GM12878 (cell line): ENCODE measurements at regions of chr1 and their contacts with region 1.

Region 1: DNA sequence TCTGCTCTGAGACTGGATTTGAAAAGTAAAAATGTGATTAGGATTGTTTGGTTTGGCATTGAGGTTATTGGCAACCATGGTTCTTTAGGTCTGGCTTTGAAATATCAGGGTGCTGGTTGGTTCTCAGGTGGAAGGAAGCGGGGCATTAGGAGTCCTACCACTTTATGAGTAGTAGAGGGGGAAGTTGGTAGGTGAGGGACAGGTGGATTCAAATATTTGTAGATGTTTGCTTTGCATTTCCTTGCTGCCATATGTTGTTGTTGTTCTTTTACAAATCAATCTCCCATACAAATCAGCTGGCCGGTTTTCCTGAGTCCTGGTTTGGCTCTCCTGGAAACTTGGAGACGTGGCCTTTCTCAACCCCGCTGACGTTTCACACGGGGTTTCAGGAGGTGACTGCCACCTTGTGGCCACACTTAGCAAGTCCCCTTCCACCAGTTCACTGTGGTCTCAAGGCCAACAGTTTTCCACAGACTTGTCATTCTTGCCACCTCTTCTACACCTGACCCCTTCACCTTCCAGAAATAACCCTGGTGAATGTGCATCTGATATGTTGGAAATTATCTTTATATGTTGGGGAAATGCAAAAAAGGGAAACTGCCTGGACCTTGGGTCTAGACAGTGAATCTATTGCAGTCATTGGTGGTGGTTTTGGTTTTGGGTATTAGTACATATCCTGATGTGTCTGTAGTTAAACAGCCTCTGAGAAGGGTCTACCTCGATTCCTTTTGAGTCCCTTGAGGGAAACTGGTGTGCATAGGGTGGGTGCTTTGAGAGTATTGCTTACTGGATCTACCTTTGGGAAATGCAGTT is 127.0 kb upstream of the KIAA0040 start:
- DNase-seq: peak; percentile 37
- ATAC-seq: peak; percentile 95
- H3K4me3 ChIP-seq: no peak overlapping the region
- H3K27ac ChIP-seq: no peak overlapping the region
- H3K4me1 ChIP-seq: no peaks in the 10 kb centered on the region
- H3K27me3 ChIP-seq: no peaks in the 10 kb centered on the region
- CTCF ChIP-seq: peak; percentile 88 to 96 (median 91)
- EP300 ChIP-seq: no peak
- POLR2A ChIP-seq: no peak
- RAD21 ChIP-seq: peak; percentile 94

Region 2: DNA sequence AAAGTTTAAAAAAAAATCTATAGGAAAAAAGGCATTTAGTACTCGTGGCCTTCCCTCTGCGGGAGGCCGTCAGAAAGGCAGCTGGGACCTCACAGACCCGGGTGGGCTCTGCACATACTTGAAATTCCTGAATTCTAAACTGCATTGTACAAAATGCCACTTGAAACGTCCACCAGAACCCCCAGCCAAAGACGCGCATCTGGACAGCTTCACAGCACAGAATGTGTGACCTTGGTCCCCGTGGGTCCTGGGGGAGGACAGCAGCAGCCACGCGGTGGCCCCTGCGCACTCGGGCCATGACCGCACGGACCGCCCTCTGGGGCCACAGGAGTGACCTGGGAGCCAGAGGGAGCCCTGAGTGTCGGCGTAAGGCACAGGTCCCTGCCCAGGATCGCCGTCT is 275.8 kb before region 1 on chr1:
- CTCF ChIA-PET with region 1: no interaction called
- POLR2A ChIA-PET with region 1: no interaction called
- RAD21 ChIA-PET with region 1: no interaction called
- SMC1A ChIA-PET with region 1: no interaction called
- in situ Hi-C with region 1: loop called (anchors 5 kb)
- intact Hi-C with region 1: no loop called
- DNase-seq: no peak
- ATAC-seq: no peak
- H3K4me3 ChIP-seq: no peak overlapping the region
- H3K27ac ChIP-seq: no peak overlapping the region
- H3K4me1 ChIP-seq: no peaks in the 10 kb centered on the region
- H3K27me3 ChIP-seq: 0 out of 4 replicates have a peak, but pooled peaks cover 0 to 1% of the 10 kb centered on the region in 2 experiments
- CTCF ChIP-seq: no peak
- EP300 ChIP-seq: no peak
- POLR2A ChIP-seq: no peak
- RAD21 ChIP-seq: no peak

Region 3: DNA sequence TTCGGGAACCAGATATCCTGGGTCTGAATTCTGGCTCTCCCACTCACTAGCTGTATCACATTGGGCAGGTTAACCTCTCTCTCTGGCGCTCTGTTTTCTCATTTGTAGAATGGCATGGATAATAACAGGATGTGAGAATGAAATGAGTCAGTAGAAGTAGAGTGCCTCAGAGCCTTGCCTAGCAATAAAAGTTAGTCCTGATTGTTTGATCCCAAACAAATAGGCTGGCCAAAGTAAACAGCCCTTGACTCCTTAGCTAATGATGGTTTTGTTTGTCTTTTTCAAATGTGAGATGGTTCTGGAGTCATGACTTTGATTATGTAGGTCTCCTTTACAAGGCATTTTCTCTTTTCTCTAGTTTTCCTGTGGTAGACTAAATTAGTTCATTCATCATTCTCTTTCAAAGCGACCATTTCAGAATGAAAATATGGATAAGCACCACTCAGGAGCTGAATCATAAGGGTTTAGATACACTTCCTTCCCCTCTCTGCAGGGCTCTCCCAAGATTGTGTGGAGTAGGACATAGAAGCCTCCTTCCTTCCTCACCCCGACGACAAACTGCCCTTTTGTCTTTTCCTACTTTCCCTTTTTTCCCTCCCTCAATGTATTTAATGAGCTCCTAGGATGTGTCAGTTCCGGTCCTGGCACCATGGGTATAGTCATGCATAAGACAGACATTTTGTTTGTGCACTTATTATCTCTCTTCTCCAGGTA is 150.2 kb before region 1 on chr1:
- CTCF ChIA-PET with region 1: interaction called, 477 read pairs
- POLR2A ChIA-PET with region 1: interaction called, 3 read pairs
- RAD21 ChIA-PET with region 1: interaction called, 3 read pairs
- SMC1A ChIA-PET with region 1: interaction called, 13 read pairs
- in situ Hi-C with region 1: no loop called
- intact Hi-C with region 1: no loop called
- DNase-seq: no peak
- ATAC-seq: no peak
- H3K4me3 ChIP-seq: no peak overlapping the region
- H3K27ac ChIP-seq: no peak overlapping the region
- H3K4me1 ChIP-seq: peaks cover 2% of the 10 kb centered on the region; the same call in 1 of the 2 replicates
- H3K27me3 ChIP-seq: no peaks in the 10 kb centered on the region
- CTCF ChIP-seq: no peak
- EP300 ChIP-seq: no peak
- POLR2A ChIP-seq: no peak
- RAD21 ChIP-seq: no peak

Region 4: GRCh38 chr1:175208773-175209492 is 110.7 kb before region 1 on chr1:
- CTCF ChIA-PET with region 1: interaction called, 6 read pairs
- POLR2A ChIA-PET with region 1: no interaction called
- RAD21 ChIA-PET with region 1: interaction called, 12 read pairs
- SMC1A ChIA-PET with region 1: interaction called, 16 read pairs
- in situ Hi-C with region 1: no loop called
- intact Hi-C with region 1: no loop called
- DNase-seq: peak; percentile 62
- ATAC-seq: peak; percentile 85
- H3K4me3 ChIP-seq: peak overlapping the region; percentile 30; the same call in 1 of the 2 replicates
- H3K27ac ChIP-seq: peak overlapping the region; percentile 78
- H3K4me1 ChIP-seq: peaks cover 27% of the 10 kb centered on the region
- H3K27me3 ChIP-seq: no peaks in the 10 kb centered on the region
- CTCF ChIP-seq: no peak
- EP300 ChIP-seq: no peak
- POLR2A ChIP-seq: peak; percentile 40; the same call in 1 of the 2 replicates
- RAD21 ChIP-seq: no peak

Region 5: DNA sequence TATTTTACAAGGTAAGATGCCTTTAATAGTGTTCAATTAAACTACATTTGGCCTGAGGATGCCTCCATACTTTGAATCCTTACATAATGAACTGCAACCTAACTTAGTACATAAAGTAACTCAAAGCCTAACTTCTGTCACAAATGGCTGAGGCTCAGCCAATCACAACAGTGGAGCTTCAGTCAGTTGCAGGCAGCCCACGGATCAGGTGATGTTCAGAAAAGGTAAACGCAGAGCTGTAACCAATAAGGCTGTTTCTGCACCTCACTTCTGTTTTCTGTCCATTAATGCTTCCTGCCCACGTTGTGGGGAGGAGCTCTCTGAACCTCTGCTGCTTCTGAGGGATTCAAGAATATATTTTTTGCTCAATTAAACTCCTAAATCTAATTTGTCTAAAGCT is 32.2 kb before region 1 on chr1:
- CTCF ChIA-PET with region 1: interaction called, 20 read pairs
- POLR2A ChIA-PET with region 1: interaction called, 3 read pairs
- RAD21 ChIA-PET with region 1: interaction called, 7 read pairs
- SMC1A ChIA-PET with region 1: interaction called, 10 read pairs
- in situ Hi-C with region 1: no loop called
- intact Hi-C with region 1: no loop called
- DNase-seq: peak; percentile 31
- ATAC-seq: peak; percentile 73
- H3K4me3 ChIP-seq: no peak overlapping the region
- H3K27ac ChIP-seq: peak overlapping the region; percentile 39
- H3K4me1 ChIP-seq: peaks cover 14% of the 10 kb centered on the region
- H3K27me3 ChIP-seq: no peaks in the 10 kb centered on the region
- CTCF ChIP-seq: no peak
- EP300 ChIP-seq: no peak
- POLR2A ChIP-seq: 0 out of 2 replicates have a peak, but pooled peaks have one; percentile 25
- RAD21 ChIP-seq: no peak